ENCODE measurements at regions of chr6 and their contacts with region 1.

Region 1: DNA sequence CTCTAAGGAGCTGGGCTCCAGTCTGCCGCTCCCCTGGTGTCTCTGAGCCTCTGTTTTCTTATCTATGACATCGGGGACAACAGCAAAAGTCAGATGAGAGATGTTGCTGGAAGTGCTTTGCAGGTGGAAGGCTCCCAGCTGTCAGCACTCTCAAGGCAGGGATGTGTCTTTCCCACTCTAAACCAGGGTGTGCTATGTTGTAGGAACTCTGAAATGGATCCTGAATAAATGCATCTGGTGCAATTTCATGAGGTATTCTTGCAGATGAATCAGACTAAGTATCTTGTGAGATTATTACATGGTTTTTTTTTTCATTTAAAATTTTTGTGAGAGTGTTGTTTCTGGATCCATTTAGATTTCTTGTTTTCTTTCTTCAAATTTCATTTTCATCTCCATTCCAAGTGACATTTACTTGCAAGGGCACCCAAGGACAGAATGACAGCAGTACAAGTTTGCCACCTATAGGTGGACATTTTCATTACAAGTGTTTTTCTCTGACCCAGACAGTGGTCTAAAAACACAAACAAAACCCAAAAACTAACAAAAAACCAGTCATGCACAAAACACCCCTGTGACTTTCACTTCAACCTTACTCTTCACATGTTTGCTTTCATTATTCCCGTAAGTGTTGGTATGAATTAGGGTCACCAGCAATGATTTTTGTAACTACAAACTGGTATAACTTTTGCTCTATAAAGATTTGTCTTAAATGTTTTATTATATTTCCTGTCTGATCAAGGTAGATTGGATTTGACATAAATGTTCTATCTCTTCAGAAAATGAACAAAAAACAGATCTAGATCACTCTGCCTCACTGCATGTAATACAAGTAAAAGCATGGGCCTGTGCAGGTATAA is 14.7 kb upstream of the SIM1 start:
- H3K4me3 ChIP-seq: no peak overlapping the region
- H3K27ac ChIP-seq: no peak overlapping the region
- H3K4me1 ChIP-seq: no peaks in the 10 kb centered on the region
- CTCF ChIP-seq: peak; percentile 53; the same call in 1 of the 2 replicates

Region 2: DNA sequence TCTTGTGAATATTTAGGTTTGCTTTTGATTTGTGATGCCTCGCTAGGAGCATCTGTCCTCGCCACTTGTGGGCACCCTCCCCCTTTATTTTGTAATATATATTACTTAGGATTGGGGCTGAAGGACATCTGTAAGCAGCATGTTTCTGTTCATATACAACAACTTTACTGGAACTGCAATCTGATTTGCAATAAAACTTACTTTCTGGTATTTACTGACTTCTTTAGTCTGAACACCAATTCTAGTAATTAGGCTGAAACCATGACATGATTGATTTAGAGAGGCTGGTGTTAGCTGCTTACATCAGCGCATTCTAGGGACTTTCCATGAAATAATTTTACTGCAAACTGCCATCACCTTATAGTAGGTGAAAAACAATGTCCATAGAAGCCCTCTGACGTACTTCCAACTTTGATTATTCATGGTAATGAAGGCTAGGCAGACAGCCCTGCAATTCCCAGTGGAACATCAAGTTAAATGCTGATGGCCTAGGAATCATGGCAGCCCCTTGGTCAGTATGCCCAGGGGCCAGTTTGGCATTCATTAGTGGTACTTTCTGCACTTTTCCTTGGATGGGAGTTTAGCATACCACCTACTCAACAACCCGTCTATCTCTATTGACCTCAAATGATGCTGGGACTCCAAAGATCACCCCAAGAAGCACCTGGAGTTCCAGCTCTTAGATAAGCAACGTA is 352.5 kb before region 1 on chr6:
- CTCF ChIA-PET with region 1: interaction called, 18 read pairs
- POLR2A ChIA-PET with region 1: no interaction called
- H3K4me3 ChIP-seq: no peak overlapping the region
- H3K27ac ChIP-seq: no peak overlapping the region
- H3K4me1 ChIP-seq: no peaks in the 10 kb centered on the region
- CTCF ChIP-seq: no peak